PC-9 (cell line): ENCODE measurements at regions of chr1 and their contacts with region 1.

Region 1: GRCh38 chr1:196558424-196558823 is 49.8 kb downstream of the KCNT2 start:
- DNase-seq: peak; percentile 12 to 40
- H3K4me3 ChIP-seq: 0 out of 2 replicates have a peak overlapping the region, but pooled peaks have one; percentile 29
- H3K27ac ChIP-seq: no peak overlapping the region
- H3K4me1 ChIP-seq: peaks cover 12% of the 10 kb centered on the region; the same call in 1 of the 2 replicates
- H3K27me3 ChIP-seq: no peaks in the 10 kb centered on the region
- CTCF ChIP-seq: no peak

Region 2: GRCh38 chr1:196477262-196477661 is 81.2 kb before region 1 on chr1:
- CTCF ChIA-PET with region 1: no interaction called
- POLR2A ChIA-PET with region 1: no interaction called
- intact Hi-C with region 1: no loop called
- DNase-seq: no peak
- H3K4me3 ChIP-seq: no peak overlapping the region
- H3K27ac ChIP-seq: no peak overlapping the region
- H3K4me1 ChIP-seq: no peaks in the 10 kb centered on the region
- H3K27me3 ChIP-seq: no peaks in the 10 kb centered on the region
- CTCF ChIP-seq: no peak

Region 3: GRCh38 chr1:196598942-196599748 is 40.7 kb after region 1 on chr1:
- CTCF ChIA-PET with region 1: no interaction called
- POLR2A ChIA-PET with region 1: no interaction called
- intact Hi-C with region 1: no loop called
- DNase-seq: no peak
- H3K4me3 ChIP-seq: no peak overlapping the region
- H3K27ac ChIP-seq: no peak overlapping the region
- H3K4me1 ChIP-seq: no peaks in the 10 kb centered on the region
- H3K27me3 ChIP-seq: no peaks in the 10 kb centered on the region
- CTCF ChIP-seq: no peak

Region 4: DNA sequence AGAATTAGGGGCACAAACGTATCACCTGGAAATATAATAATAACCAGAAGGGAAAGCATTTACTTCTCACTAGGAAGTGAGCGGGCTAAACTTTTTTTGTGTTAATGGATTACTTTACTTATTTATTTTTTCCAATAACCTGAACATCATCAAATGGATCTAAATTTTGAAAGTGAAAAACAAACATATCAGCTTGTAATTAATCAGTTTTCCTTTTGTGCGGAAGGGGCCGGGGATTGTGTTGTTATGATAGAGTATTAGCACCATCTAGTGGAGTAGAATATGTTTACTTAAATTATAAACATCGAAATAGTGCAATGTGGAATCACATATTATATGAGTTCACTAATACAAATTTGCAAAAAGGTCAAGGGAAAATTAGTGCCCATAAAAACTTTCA is 102.4 kb after region 1 on chr1:
- CTCF ChIA-PET with region 1: no interaction called
- POLR2A ChIA-PET with region 1: no interaction called
- intact Hi-C with region 1: no loop called
- DNase-seq: no peak
- H3K4me3 ChIP-seq: no peak overlapping the region
- H3K27ac ChIP-seq: no peak overlapping the region
- H3K4me1 ChIP-seq: no peaks in the 10 kb centered on the region
- H3K27me3 ChIP-seq: no peaks in the 10 kb centered on the region
- CTCF ChIP-seq: peak; percentile 81

Region 5: DNA sequence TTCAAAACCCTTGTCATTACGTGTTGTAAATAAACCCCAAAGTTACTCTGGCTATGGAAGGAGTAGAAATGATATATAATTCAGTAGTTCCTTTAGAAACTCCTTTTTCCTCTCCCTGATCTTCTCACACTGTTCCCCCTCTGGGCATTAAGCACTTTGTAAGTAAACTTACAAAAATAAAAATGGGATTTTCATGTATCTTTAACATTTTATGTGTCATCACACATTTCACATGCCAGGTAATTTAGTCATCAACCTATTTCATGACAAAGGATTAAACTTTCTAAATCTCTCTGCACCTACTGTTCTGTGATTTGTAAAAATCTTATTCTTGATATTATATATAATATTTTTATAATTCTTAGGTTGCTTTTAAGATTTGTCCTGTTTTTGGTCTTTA is 1775.3 kb after region 1 on chr1:
- CTCF ChIA-PET with region 1: no interaction called
- POLR2A ChIA-PET with region 1: interaction called, 18 read pairs
- intact Hi-C with region 1: no loop called
- DNase-seq: no peak
- H3K4me3 ChIP-seq: no peak overlapping the region
- H3K27ac ChIP-seq: no peak overlapping the region
- H3K4me1 ChIP-seq: 0 out of 2 replicates have a peak, but pooled peaks cover 12% of the 10 kb centered on the region
- H3K27me3 ChIP-seq: no peaks in the 10 kb centered on the region
- CTCF ChIP-seq: no peak